Posterior vena cava (tissue), 2 donors: ENCODE measurements at regions of chr3 and their contacts with region 1.

Region 1: DNA sequence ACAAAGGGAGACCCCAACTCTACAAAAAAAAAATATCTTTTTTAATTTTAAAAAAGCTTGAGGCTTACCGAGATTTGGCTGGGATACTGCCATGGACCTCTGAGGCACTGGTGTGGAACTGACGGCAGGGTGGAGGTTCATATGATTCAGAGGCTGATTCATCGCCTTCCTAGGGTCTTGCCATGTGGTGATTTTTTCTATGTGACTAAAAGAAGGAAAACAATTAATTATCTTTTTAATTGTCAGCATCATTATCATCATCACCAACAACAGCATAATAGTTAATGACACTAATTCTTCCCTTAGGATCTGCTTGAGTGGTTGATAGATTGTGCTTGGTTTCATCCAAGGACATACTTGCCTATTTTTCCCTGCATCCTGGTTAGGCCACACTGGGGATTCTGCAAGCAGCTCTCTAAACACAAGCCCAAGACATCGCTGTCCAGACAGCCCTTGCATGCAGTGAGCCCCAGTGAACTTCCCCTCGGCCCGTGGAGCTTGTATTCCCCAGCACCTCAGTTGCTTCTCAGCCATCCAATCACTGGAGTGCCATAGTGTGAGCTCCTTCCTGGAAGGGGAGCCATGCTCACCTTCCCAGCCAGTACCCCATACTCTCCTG is 84.9 kb downstream of the WWTR1 start:
- DNase-seq: no peak

Region 2: DNA sequence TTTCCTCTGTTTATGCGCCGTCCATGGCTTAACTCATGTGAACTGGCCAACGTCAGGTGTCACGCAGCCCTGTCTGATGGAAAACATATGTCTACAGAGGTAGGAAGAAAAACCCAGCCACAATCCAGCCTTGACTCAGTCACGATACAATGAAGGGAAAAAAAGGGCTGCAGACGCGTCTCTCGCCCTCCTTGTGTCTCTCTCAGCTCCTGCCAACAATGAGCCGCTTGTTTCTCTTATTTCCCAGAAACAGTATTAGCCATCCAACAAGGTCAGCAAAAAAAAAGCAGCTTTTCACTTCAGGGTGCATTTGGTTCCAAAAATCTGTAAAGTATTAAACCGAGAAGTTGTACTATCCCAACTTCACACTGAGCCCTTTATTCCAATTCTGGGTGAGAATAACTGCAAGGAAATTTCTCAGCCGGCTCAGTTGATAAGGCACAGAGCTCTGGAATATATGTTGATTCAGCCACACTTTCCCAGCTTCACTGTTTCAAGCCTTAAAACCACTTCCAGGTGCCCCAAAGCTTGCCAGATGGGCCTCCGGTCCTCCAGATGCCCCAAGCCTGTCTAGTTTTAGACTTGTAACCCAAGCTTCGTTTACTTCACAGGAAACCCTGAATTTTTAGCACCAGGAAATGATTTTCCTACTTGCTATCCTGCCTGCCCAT is 19.0 kb before region 1 on chr3:
- intact Hi-C with region 1: loop called in 1 of 2 experiments (anchors 2 kb)
- DNase-seq: no peak

Region 3: DNA sequence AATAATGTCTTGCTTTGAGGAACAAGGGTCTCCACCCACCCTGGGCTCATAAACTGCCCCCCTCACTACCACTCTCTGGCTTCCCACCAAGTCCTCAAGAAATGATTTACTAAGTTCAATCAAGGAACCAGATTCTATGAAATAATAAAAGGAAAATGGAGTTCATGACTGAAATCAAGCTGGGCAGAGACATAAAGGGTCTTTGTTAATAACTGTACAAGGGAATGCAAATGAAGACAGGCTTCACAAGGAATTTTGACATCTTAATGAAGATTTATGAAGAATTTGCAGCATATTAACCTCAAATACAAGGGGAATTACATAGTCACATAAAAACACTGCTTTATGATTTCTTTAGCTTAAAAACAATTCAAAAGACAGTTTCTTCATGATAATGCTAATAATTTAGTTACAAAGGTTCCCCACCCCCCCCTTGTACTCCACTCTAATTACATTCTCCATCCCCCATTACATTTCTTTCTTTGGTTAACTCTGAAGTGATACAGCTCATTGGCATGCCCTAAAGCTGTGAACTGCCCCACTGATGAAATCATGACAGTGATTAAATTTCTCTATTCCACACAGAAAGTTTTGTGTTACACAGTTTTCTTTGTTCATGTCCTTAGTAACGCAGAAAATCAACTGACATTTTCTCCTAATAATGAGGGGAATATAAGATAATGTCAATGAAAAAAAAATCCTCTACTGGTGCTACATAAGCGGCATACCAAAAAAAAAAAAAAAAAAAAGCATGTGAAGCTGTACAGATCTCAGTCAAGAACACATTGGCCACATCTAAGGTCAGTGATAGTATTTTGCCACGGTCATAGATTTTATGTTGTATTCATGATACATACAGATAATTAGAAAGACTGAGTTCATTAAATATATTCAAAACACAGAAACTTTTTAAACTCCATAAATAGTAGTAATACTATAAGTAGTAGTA is 30.5 kb after region 1 on chr3:
- intact Hi-C with region 1: loop called in 1 of 2 experiments (anchors 1 kb)
- DNase-seq: no peak

Region 4: DNA sequence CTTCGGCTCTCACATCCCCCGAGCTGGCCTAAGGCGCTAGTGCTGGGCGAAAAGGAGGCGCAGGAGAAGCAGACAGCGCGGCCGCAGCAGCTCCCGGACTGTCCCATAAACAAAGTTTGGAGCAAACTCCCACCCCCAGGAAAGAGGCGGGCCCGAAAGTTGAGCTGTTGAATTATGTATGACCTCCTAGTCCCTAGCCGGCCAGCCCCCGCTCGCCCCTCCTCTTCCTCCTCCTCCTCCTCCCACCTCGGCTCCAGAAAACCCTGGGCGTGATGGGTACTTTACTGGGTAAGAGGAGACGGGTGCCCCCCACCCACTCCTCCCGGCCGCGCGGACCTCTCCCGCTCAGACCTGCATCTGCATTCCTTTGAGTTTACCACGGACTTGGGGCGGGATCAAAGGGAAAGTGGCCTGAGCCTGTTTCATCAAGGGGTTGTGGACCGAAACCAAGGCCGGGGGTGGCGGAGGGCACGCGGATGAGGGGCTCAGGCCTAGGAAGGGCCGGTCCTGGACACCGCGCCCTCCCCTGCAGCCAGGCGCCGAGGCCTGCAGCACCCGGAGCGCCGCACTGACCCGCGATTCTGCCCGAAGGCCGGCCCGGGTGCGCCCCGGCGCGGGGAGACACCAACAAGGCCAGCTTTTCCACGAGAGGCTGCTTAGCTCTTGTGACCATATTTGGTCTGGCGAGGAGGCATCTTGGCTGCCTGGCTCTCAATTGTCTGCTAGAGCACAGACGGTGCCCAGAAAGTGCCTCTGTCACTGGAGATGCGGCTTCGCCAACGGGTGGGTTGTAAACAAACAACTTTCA is 85.2 kb after region 1 on chr3 and contains the start of gene WWTR1:
- intact Hi-C with region 1: loop called in 1 of 2 experiments (anchors 2 kb)
- DNase-seq: peak; percentile 97
- total RNA-seq, gene WWTR1: 177 to 201 TPM